Esophagus muscularis mucosa (tissue), 4 donors: ENCODE measurements at regions of chr12 and their contacts with region 1.

Region 1: DNA sequence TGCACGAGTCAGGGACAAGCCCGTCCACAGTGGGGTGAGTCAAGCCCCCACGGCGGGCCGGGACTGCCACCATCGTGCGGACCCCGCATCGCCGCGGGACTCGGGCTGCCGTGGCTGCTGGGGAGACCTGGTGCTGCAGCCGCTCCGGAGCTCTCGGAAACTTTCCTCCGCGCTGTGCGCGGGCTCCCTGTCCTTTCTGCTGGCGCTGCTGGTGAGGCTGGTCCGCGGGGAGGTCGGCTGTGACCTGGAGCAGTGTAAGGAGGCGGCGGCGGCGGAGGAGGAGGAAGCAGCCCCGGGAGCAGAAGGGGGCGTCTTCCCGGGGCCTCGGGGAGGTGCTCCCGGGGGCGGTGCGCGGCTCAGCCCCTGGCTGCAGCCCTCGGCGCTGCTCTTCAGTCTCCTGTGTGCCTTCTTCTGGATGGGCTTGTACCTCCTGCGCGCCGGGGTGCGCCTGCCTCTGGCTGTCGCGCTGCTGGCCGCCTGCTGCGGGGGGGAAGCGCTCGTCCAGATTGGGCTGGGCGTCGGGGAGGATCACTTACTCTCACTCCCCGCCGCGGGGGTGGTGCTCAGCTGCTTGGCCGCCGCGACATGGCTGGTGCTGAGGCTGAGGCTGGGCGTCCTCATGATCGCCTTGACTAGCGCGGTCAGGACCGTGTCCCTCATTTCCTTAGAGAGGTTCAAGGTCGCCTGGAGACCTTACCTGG is 1.1 kb downstream of the PDE3A start:
- DNase-seq: peak; percentile 93
- H3K4me3 ChIP-seq: peak overlapping the region; percentile 67 to 85 (median 82)
- H3K27ac ChIP-seq: peak overlapping the region; percentile 89 to 96 (median 92)
- H3K4me1 ChIP-seq: peaks cover 5 to 33% (median 21%) of the 10 kb centered on the region in 4 donors
- H3K27me3 ChIP-seq: no peaks in the 10 kb centered on the region
- CTCF ChIP-seq: peak; percentile 24 to 45 (median 35)
- EP300 ChIP-seq: no peak
- POLR2A ChIP-seq: no peak

Region 2: DNA sequence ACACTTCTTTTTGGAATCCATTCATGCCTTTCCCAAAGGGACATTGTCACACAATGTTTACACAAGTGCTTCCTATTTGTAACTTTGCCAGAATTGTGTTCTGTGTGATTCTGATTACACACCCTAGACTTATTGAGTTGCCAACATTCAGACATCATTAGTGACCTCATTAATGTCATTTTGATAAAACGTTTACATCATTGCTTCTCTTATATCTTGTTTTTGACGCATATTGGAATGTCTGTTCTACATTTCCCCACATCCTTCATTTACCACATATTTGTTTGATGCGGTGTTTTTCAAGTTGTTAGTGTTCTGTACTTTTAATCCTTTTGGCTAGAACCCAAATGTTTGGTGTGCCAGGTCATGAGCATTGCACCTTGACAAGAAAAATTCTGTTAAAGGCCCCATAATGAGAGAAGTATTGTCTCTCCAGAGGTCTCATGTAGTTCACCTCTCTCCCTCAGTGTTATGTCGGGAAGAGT is 624.7 kb before region 1 on chr12:
- intact Hi-C with region 1: loop called (anchors 10 kb)
- DNase-seq: no peak
- H3K4me3 ChIP-seq: no peak overlapping the region
- H3K27ac ChIP-seq: peak overlapping the region in 2 of 4 donors; percentile 28 to 41
- H3K4me1 ChIP-seq: peaks cover 14 to 31% (median 26%) of the 10 kb centered on the region in 4 donors
- H3K27me3 ChIP-seq: no peaks in the 10 kb centered on the region
- CTCF ChIP-seq: no peak
- EP300 ChIP-seq: no peak
- POLR2A ChIP-seq: no peak

Region 3: DNA sequence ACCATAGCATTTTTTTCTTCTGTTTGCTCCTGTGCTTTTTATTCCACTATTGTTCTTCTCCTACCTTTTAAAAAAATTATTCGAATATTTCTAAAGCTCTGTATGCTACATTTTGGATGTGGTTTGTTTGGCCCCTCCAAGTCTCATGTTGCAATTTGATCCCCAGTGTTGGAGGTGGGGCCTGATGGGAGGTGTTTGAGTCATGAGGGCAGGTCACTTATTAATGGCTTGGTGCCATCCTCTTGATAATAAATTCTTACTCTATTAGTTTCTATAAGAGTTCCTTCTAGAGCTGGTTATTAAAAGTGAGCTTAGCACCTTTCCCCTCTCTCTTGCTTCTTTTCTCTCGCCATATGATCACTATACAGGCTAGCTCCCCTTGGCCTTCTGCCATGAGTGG is 446.8 kb before region 1 on chr12:
- intact Hi-C with region 1: loop called (anchors 10 kb)
- DNase-seq: no peak
- H3K4me3 ChIP-seq: no peak overlapping the region
- H3K27ac ChIP-seq: no peak overlapping the region
- H3K4me1 ChIP-seq: peaks cover 0 to 8% (median 5%) of the 10 kb centered on the region in 4 donors
- H3K27me3 ChIP-seq: no peaks in the 10 kb centered on the region
- CTCF ChIP-seq: no peak
- EP300 ChIP-seq: no peak
- POLR2A ChIP-seq: no peak

Region 4: DNA sequence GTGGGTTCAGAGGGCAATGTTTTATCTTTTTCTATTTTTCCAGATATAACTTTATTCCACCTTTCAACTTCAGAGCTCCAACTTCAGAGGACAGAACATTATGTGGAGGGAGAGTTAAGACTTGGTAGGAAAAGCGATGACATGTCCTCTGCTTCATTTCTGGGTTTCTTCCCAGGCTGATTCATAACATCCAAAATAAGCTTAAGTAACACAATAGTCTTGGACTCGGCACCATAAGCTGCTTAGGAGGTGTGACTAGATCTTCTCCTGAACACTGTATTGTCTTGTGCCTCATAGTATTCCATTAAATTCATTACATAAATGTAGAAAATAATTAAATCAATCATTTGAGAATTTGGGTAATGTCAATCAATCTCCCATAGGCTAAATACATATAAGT is 96.7 kb before region 1 on chr12:
- intact Hi-C with region 1: loop called (anchors 5 kb)
- DNase-seq: no peak
- H3K4me3 ChIP-seq: no peak overlapping the region
- H3K27ac ChIP-seq: peak overlapping the region; percentile 74 to 77 (median 76)
- H3K4me1 ChIP-seq: peaks cover 18 to 75% (median 61%) of the 10 kb centered on the region in 4 donors
- H3K27me3 ChIP-seq: no peaks in the 10 kb centered on the region
- CTCF ChIP-seq: no peak
- EP300 ChIP-seq: no peak
- POLR2A ChIP-seq: no peak

Region 5: GRCh38 chr12:20549107-20549719 is 179.8 kb after region 1 on chr12:
- intact Hi-C with region 1: loop called (anchors 5 kb)
- DNase-seq: no peak
- H3K4me3 ChIP-seq: no peak overlapping the region
- H3K27ac ChIP-seq: peak overlapping the region; percentile 50 to 74 (median 62)
- H3K4me1 ChIP-seq: peaks cover 27 to 50% (median 47%) of the 10 kb centered on the region in 4 donors
- H3K27me3 ChIP-seq: no peaks in the 10 kb centered on the region
- CTCF ChIP-seq: peak; percentile 52 to 64 (median 62)
- EP300 ChIP-seq: no peak
- POLR2A ChIP-seq: no peak

Region 6: DNA sequence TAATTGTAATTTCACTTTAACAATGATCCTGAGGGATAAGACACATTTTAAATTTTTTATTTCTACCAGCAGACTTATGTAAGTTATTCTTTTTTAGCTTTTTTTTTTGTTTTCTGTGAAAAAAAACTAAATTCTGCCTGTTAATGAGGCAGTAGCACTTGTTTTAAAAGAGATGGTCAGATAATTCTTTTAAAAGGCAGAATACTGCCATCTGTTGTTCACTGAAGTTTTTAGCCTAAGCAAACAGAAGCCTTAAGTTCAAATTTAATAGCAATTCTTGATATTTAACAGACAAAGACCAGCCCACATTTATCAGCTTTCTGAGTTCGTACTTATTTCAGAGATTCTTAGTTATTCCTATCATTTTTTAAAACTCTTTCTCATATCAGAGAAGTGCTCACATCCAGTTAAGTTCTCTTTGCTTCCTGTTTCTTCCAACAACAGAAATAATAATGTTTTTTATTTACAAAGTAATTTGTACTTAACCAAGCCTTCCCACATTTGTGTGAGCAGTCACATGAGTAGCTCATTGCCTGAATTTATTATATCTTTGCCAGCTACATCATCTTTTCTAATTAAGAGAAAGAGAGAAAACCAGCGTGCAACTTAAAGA is 232.3 kb after region 1 on chr12:
- intact Hi-C with region 1: loop called (anchors 5 kb)
- DNase-seq: no peak
- H3K4me3 ChIP-seq: no peak overlapping the region
- H3K27ac ChIP-seq: peak overlapping the region; percentile 49 to 70 (median 68)
- H3K4me1 ChIP-seq: peaks cover 20 to 69% (median 45%) of the 10 kb centered on the region in 4 donors
- H3K27me3 ChIP-seq: no peaks in the 10 kb centered on the region
- CTCF ChIP-seq: peak; percentile 55 to 62 (median 62)
- EP300 ChIP-seq: no peak
- POLR2A ChIP-seq: no peak